HEK293 (cell line): ENCODE measurements at regions of chr1 and their contacts with region 1.

Region 1: DNA sequence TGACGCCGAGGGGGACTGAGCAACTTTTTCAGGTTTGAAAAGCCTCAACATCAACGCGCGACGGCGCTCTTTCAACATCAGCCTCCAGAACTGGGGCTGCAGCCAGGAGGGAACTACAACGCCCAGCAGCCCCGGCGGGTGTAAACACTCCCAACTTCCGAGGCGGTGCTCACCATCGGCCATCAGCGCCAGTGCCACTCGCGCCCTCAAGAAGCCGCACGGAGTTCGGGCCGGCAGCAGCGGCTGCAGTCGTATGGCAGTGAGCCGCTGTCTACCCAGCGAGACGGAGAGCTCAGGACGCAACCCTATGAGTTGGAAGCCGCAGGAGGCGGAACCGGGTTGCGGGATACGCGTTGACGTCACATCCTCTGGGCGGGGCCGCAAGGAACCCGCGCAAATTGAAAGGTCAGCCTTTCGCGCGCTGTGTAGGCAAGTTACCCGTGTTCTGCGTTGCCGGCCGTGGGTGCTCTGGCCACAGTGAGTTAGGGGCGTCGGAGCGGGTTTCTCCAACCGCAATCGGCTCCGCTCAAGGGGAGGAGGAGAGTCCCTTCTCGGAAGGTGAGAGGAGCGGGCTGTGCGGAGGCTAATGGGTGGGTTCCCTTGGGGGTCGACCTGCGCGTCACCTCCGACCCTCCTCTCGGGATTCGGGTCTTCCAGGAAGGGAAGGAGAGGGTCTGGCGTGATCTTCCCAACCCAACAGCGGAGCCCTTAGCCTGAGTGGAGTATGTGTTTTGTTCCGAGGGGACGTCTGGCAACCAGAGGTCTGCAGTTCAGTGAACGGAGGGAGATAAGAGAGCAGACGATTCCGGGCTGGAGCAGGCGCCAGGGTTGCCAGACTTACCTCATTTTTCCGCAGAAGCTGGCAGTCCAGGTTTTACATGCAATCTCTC is at the start of gene EXO1:
- H3K4me3 ChIP-seq: peak within 1 kb of the TSS; percentile 60
- H3K27ac ChIP-seq: peak within 1 kb of the TSS; percentile 92
- H3K4me1 ChIP-seq: peaks cover 8% of the 10 kb centered on the region
- CTCF ChIP-seq: peak; percentile 91

Region 2: GRCh38 chr1:241640029-241640818 is 207.8 kb before region 1 on chr1 and contains the starts of genes CHML and OPN3:
- CTCF ChIA-PET with region 1: interaction called, 4 read pairs
- POLR2A ChIA-PET with region 1: interaction called, 13 read pairs
- H3K4me3 ChIP-seq: peak within 1 kb of the TSS; percentile 95
- H3K27ac ChIP-seq: peak within 1 kb of the TSS; percentile 89
- H3K4me1 ChIP-seq: peaks cover 10% of the 10 kb centered on the region
- CTCF ChIP-seq: no peak

Region 3: GRCh38 chr1:241834733-241835377 is 13.2 kb before region 1 on chr1:
- CTCF ChIA-PET with region 1: interaction called, 18 read pairs
- POLR2A ChIA-PET with region 1: interaction called, 7 read pairs
- H3K4me3 ChIP-seq: no peak overlapping the region
- H3K27ac ChIP-seq: no peak overlapping the region
- H3K4me1 ChIP-seq: no peaks in the 10 kb centered on the region
- CTCF ChIP-seq: peak; percentile 44; the same call in 1 of the 2 replicates